ENCODE measurements at regions of chr2 and their contacts with region 1.

Region 1: GRCh38 chr2:175251425-175252041 is 70.0 kb upstream of the ATP5MC3 start:
- DNase-seq: no peak
- ATAC-seq: no peak
- H3K4me3 Mint-ChIP-seq: no peak overlapping the region
- H3K27ac Mint-ChIP-seq: no peak overlapping the region
- H3K4me1 Mint-ChIP-seq: 0 out of 2 replicates have a peak, but pooled peaks cover 2% of the 10 kb centered on the region
- H3K27me3 Mint-ChIP-seq: no peaks in the 10 kb centered on the region; the same call in 1 of the 2 replicates
- CTCF ChIP-seq: no peak; the same call in 1 of the 2 replicates

Region 2: DNA sequence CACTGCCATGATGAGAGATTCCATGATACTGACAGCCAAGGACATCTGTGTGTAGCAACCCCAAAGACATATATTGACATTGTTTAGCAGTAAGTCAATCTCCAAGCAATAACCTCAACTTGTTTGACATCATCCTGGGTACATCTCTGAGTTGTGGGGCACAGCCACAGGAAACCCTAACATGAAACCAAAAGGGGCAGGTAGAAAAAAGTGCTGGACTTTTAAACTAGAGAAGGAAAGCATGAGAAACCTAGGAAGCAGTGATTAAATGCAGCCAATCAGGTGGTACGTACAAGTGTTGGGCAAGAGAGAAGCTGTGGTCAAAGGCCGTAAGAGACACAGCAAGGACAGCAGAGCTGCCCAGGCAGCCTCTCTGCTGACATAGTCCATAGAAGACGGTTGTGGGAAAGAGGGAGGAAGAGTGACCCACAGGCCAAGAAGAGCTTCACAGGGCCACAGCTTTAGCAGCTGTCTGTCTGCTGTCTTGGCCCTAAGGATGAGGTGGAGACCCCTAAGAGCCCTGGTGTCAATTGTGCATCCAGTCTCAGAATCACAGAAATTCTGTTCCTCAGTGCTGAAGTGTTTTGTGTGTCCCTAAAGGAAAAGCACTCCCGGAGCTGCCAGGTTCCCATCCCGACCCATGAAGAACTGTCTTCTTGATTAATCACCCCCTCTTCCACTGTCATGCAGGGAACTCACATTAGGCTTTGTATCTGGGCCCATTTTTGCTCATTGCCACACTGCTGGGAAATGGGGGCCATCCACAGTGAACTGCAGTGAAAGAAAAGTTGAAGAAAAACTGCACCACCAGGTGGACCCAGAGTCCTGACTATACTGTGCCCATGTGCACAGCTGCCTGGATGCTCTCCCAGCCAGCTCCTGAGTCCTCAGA is 220.9 kb before region 1 on chr2:
- CTCF ChIA-PET with region 1: interaction called, 11 read pairs
- POLR2A ChIA-PET with region 1: no interaction called
- DNase-seq: peak; percentile 61
- ATAC-seq: peak; percentile 99
- H3K4me3 Mint-ChIP-seq: no peak overlapping the region
- H3K27ac Mint-ChIP-seq: no peak overlapping the region
- H3K4me1 Mint-ChIP-seq: peaks cover 13% of the 10 kb centered on the region
- H3K27me3 Mint-ChIP-seq: no peaks in the 10 kb centered on the region
- CTCF ChIP-seq: 0 out of 2 replicates have a peak, but pooled peaks have one; percentile 18

Region 3: GRCh38 chr2:175203621-175204496 is 47.7 kb before region 1 on chr2:
- CTCF ChIA-PET with region 1: interaction called, 27 read pairs
- POLR2A ChIA-PET with region 1: no interaction called
- DNase-seq: peak; percentile 76
- ATAC-seq: peak; percentile 100
- H3K4me3 Mint-ChIP-seq: no peak overlapping the region
- H3K27ac Mint-ChIP-seq: no peak overlapping the region
- H3K4me1 Mint-ChIP-seq: peaks cover 3% of the 10 kb centered on the region; the same call in 1 of the 2 replicates
- H3K27me3 Mint-ChIP-seq: no peaks in the 10 kb centered on the region; the same call in 1 of the 2 replicates
- CTCF ChIP-seq: no peak

Region 4: DNA sequence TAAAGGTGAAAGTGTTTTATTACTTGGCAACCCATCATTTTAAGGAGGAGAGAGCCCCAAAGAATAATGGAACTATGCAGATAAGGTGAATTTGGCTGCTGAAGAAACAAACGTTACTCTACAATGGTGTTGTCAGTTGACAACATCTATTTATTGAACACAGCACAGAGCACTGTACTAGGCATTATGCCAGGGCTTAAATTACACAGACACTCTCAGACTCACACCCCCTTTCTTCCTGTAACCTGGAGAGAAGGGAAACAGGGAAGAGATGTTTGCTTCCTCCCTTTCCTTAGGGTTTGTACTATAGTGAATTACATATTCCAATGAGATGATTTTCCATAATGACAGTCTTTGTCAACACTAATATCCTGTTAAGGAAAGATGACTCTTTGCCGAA is 24.0 kb after region 1 on chr2:
- CTCF ChIA-PET with region 1: interaction called, 14 read pairs
- POLR2A ChIA-PET with region 1: no interaction called
- DNase-seq: no peak
- ATAC-seq: no peak
- H3K4me3 Mint-ChIP-seq: no peak overlapping the region
- H3K27ac Mint-ChIP-seq: no peak overlapping the region
- H3K4me1 Mint-ChIP-seq: peaks cover 22% of the 10 kb centered on the region
- H3K27me3 Mint-ChIP-seq: no peaks in the 10 kb centered on the region
- CTCF ChIP-seq: no peak

Region 5: GRCh38 chr2:175282290-175282689 is 30.8 kb after region 1 on chr2:
- CTCF ChIA-PET with region 1: interaction called, 41 read pairs
- POLR2A ChIA-PET with region 1: no interaction called
- DNase-seq: no peak
- ATAC-seq: peak; percentile 88
- H3K4me3 Mint-ChIP-seq: no peak overlapping the region
- H3K27ac Mint-ChIP-seq: no peak overlapping the region
- H3K4me1 Mint-ChIP-seq: no peaks in the 10 kb centered on the region
- H3K27me3 Mint-ChIP-seq: no peaks in the 10 kb centered on the region; the same call in 1 of the 2 replicates
- CTCF ChIP-seq: 0 out of 2 replicates have a peak, but pooled peaks have one; percentile 32

Region 6: DNA sequence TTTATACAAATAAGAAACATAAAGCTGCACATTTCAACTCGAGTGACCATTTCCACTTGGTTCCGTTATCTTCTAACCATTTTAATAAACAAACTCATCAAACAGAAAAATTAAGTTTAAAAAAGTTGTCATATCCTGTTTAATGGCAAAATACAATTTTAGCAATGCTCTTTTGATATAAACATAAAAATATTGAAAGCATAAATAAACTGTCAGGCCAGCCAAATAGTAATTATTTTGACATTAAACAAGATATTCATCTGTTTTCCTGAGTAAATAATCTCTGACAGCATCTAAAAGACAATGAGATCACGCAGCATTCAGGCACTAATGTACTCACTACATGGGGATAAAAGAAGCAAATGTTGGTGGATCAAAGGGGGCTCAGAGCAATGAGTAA is 75.3 kb after region 1 on chr2:
- CTCF ChIA-PET with region 1: interaction called, 22 read pairs
- POLR2A ChIA-PET with region 1: no interaction called
- DNase-seq: no peak
- ATAC-seq: no peak
- H3K4me3 Mint-ChIP-seq: no peak overlapping the region
- H3K27ac Mint-ChIP-seq: no peak overlapping the region
- H3K4me1 Mint-ChIP-seq: peaks cover 4% of the 10 kb centered on the region
- H3K27me3 Mint-ChIP-seq: 0 out of 2 replicates have a peak, but pooled peaks cover 4% of the 10 kb centered on the region
- CTCF ChIP-seq: no peak

Region 7: GRCh38 chr2:176096986-176097819 is 845.7 kb after region 1 on chr2:
- CTCF ChIA-PET with region 1: interaction called, 27 read pairs
- POLR2A ChIA-PET with region 1: no interaction called
- DNase-seq: peak; percentile 93
- ATAC-seq: peak; percentile 68
- H3K4me3 Mint-ChIP-seq: peak overlapping the region; percentile 65
- H3K27ac Mint-ChIP-seq: peak overlapping the region; percentile 37; the same call in 1 of the 2 replicates
- H3K4me1 Mint-ChIP-seq: peaks cover 65% of the 10 kb centered on the region
- H3K27me3 Mint-ChIP-seq: peaks cover 96% of the 10 kb centered on the region
- CTCF ChIP-seq: peak; percentile 74

Measured in WTC11 (cell line).